AG04450 (cell line): ENCODE measurements at regions of chr15 and their contacts with region 1.

Region 1: GRCh38 chr15:29925227-29926082 is 103.2 kb upstream of the TJP1 start:
- DNase-seq: peak; percentile 44
- H3K4me3 ChIP-seq: no peak overlapping the region
- H3K27ac ChIP-seq: no peak overlapping the region
- H3K27me3 ChIP-seq: no peaks in the 10 kb centered on the region
- CTCF ChIP-seq: peak; percentile 90

Region 2: GRCh38 chr15:28167042-28167441 is 1758.4 kb before region 1 on chr15:
- CTCF ChIA-PET with region 1: no interaction called
- POLR2A ChIA-PET with region 1: no interaction called
- DNase-seq: no peak
- H3K4me3 ChIP-seq: no peak overlapping the region
- H3K27ac ChIP-seq: no peak overlapping the region
- H3K27me3 ChIP-seq: no peaks in the 10 kb centered on the region
- CTCF ChIP-seq: no peak

Region 3: GRCh38 chr15:29631076-29632070 is 294.1 kb before region 1 on chr15:
- CTCF ChIA-PET with region 1: no interaction called
- POLR2A ChIA-PET with region 1: no interaction called
- DNase-seq: no peak
- H3K4me3 ChIP-seq: no peak overlapping the region
- H3K27ac ChIP-seq: no peak overlapping the region
- H3K27me3 ChIP-seq: peaks cover 8% of the 10 kb centered on the region
- CTCF ChIP-seq: no peak

Region 4: GRCh38 chr15:29740692-29741311 is 184.7 kb before region 1 on chr15:
- CTCF ChIA-PET with region 1: interaction called, 126 read pairs
- POLR2A ChIA-PET with region 1: interaction called, 3 read pairs
- DNase-seq: no peak
- H3K4me3 ChIP-seq: no peak overlapping the region
- H3K27ac ChIP-seq: no peak overlapping the region
- H3K27me3 ChIP-seq: no peaks in the 10 kb centered on the region
- CTCF ChIP-seq: peak; percentile 11; the same call in 1 of the 2 replicates

Region 5: DNA sequence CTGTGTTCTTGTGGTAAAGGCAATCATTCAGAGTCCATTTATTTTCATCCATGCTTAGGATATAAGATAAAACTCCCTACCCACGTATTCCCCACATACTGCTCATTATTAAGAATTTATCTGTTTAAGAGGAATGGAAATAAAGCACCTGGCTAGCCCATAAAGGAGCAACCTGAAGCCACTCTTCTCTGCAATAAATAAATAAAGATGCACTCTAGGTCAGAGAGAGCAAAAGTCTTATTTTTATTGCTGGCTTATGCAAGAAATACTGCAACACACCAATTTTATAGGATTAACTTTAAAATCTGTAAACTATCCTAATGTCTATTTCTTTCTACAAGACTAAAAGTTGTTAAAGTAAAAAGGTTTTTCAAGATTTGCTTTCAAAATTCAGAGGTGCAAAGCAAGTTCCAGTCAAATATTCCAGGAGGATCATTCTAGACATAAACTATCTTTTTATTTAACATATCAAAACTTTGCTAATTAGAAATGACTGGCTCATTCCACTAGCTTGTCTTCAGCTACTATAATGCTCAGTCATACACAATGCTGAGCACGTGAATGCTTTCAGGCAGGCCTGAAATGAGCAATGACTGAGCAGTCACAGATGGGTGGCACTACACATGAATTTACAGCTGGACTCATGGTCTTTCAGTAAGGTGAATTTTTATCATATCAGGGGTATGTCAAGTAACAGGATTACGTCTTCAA is 110.3 kb before region 1 on chr15:
- CTCF ChIA-PET with region 1: interaction called, 32 read pairs
- POLR2A ChIA-PET with region 1: no interaction called
- DNase-seq: no peak
- H3K4me3 ChIP-seq: no peak overlapping the region
- H3K27ac ChIP-seq: no peak overlapping the region
- H3K27me3 ChIP-seq: no peaks in the 10 kb centered on the region
- CTCF ChIP-seq: no peak

Region 6: DNA sequence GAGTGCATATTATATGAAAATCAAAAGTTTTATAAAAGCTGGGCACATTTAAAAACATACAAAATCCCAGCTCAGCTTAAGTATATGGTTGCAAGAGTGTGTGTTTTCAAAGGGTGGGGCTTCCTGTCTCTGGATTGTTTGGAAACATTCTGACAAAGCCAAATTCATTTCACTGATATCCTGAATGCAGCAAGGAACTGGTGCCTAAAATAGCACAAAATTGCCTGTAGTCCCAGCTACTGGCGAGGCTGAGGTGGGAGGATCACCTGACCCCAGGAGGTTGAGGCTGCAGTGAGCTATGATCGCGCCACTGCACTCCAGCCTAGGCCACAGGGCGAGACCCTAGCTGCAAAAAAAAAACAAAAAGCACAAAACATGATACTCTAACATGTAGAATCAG is 90.2 kb before region 1 on chr15:
- CTCF ChIA-PET with region 1: interaction called, 15 read pairs
- POLR2A ChIA-PET with region 1: no interaction called
- DNase-seq: no peak
- H3K4me3 ChIP-seq: no peak overlapping the region
- H3K27ac ChIP-seq: no peak overlapping the region
- H3K27me3 ChIP-seq: no peaks in the 10 kb centered on the region
- CTCF ChIP-seq: no peak

Region 7: DNA sequence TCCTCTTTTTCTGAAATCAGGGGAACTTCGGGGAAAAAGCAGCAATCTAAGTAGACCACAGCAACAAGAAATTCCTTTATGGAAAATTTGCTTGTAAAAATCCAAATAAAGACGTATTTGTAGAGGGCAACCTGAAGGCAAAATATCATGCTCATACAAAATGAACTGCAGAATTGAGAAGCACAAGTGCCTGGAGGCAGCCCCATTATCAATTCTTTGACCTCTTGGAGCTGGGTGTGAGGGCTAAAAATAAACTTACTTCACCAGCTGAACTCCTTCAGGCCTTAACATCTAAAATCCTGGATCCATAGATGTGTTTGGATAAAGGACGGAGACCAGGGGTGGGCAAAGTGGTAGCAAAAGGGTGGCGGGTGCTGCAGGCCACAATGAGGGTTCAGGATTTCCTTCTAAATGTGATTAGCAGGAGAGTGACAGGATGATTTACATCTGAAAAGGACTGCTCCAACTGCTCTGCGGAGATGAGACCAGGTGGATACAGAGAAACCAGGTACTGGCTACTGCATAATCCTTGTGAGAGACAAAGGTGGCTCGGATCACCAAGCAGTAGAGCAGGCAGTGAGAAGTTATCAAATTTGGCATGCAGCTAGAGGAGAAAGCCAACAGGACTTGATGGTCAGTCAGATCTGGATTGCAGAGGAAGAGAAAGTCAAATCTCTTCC is 21.5 kb before region 1 on chr15:
- CTCF ChIA-PET with region 1: interaction called, 10 read pairs
- POLR2A ChIA-PET with region 1: no interaction called
- DNase-seq: no peak
- H3K4me3 ChIP-seq: no peak overlapping the region
- H3K27ac ChIP-seq: no peak overlapping the region
- H3K27me3 ChIP-seq: no peaks in the 10 kb centered on the region
- CTCF ChIP-seq: no peak

Region 8: DNA sequence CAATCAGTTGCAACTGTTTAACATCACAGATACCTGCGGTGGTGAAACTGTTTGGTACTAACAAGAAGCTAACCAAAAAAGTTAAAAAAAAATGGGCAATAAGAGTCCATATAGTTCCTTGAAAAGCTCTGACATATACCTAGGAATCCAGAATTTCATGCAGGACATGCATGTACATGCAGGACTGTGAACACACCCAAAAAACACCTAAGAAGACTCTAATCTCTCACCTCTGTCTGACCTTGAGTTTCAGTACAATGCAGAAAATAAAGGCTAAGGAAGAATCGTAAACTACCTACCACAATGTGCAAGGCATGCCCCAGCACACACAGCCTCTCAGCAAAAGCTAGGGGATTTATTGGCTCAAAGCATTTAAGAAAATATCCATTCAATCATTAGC is 46.6 kb after region 1 on chr15:
- CTCF ChIA-PET with region 1: no interaction called
- POLR2A ChIA-PET with region 1: no interaction called
- DNase-seq: no peak
- H3K4me3 ChIP-seq: no peak overlapping the region
- H3K27ac ChIP-seq: no peak overlapping the region
- H3K27me3 ChIP-seq: peaks cover 45% of the 10 kb centered on the region
- CTCF ChIP-seq: no peak